ENCODE measurements at regions of chr10 and their contacts with region 1.

Region 1: DNA sequence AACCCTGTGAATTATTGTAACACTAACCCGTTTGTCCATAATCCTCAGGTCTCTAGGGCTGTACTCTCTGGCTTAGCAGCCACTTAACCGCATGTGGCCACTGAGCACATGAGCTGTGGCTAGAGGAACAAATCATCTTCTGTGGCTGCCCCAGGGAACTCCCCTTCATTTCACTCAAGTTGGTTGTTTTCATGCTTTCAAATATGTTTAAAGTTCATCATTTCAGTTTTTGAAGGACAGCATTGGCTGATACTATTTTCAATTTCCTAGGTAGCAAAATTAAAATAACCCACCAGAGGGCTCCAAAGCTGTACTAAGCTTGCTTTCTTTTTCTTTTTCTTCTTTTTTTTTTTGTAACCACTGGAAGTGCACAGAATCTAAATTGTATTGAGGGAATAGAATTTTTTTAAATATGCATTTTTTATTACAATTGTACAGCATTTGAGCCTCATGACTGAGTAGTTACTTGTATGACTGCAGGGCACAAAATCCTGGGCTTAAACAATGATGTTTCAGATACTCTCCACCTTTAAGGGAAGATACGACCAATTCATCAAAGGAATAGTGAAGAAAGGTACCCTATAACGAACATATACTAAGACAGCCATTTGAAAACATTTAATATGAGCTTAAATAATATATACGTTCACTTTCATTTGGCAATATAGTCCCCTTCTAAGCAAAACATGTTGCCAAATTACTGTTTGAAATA is 38.6 kb downstream of the MRC1 start:
- DNase-seq: peak; percentile 35
- H3K4me3 Mint-ChIP-seq: no peak overlapping the region
- H3K27ac Mint-ChIP-seq: no peak overlapping the region
- H3K4me1 Mint-ChIP-seq: peaks cover 9% of the 10 kb centered on the region
- H3K27me3 Mint-ChIP-seq: no peaks in the 10 kb centered on the region
- CTCF ChIP-seq: peak; percentile 38

Region 2: DNA sequence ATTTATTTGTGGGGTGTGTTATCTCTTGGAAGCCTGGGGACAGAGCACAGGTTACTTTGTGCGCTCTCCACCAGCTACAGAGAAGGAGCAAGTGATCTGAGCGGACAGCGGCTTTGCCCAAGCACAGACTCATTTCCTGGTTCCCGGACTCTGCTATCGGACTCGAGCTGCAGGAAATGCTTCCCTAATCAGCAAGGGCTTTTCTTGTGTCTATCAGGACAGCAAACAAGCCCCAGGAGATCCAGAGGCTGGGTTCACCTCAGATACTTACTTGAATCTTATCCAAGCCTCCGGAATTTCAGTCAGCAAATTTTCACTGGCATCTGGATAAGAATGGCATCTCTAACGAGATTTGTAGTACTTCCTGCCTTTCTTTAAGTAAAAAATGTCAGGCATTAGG is 10.8 kb before region 1 on chr10:
- CTCF ChIA-PET with region 1: interaction called, 14 read pairs
- POLR2A ChIA-PET with region 1: interaction called, 4 read pairs
- intact Hi-C with region 1: no loop called
- DNase-seq: peak; percentile 22
- H3K4me3 Mint-ChIP-seq: no peak overlapping the region
- H3K27ac Mint-ChIP-seq: no peak overlapping the region
- H3K4me1 Mint-ChIP-seq: peaks cover 25% of the 10 kb centered on the region
- H3K27me3 Mint-ChIP-seq: no peaks in the 10 kb centered on the region
- CTCF ChIP-seq: no peak

Region 3: DNA sequence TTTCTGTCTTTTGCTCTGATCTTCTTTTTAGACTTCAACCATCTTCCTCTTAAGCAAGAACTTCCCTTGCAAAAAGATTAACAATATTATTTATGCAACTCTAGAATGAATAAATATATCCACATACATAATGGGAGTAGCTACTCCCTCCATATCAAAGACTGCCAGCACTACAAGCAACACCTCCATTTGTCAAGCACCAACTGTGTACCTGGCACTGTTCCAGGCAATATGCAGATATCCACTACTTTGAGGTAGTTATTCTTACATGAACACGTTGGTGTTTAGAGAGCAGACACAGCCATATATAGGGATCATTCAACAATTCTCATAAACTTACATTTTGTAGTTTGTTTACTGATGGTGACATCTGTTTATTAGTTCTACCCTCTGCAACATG is 208.8 kb after region 1 on chr10:
- CTCF ChIA-PET with region 1: no interaction called
- POLR2A ChIA-PET with region 1: no interaction called
- intact Hi-C with region 1: no loop called
- DNase-seq: no peak
- H3K4me3 Mint-ChIP-seq: no peak overlapping the region
- H3K27ac Mint-ChIP-seq: no peak overlapping the region
- H3K4me1 Mint-ChIP-seq: no peaks in the 10 kb centered on the region
- H3K27me3 Mint-ChIP-seq: no peaks in the 10 kb centered on the region
- CTCF ChIP-seq: no peak

Region 4: DNA sequence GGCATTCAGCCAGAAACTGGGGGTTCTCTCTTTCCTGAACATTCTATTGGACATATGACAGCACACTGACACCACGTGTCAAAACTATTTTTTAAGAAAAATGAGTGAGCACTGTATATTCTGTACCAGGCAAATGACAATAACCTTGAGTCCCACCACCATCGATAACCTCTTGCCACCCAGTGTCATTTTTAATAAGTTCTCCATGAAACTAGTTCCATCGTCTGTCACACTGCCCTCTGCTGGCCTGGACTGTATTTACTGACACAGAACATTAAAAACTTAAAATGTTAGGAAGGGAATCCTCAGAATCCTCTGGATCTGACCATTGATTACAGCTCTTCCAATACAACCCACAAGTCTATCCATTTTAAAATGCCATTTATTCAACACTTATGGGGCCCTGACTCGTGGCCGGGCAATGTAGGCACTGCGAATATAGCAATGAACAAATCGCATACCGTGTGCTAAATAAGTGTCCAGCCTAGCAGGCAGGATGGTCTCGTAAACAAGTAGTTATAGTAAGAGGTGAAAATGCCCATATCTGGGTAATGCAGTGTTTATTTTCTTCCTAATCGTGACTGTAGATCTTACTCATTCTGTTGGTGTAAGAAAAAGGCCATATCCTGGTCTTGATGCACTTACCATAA is 256.6 kb after region 1 on chr10:
- CTCF ChIA-PET with region 1: interaction called, 19 read pairs
- POLR2A ChIA-PET with region 1: no interaction called
- intact Hi-C with region 1: loop called (anchors 1 kb)
- DNase-seq: peak; percentile 65
- H3K4me3 Mint-ChIP-seq: no peak overlapping the region
- H3K27ac Mint-ChIP-seq: no peak overlapping the region
- H3K4me1 Mint-ChIP-seq: peaks cover 6% of the 10 kb centered on the region
- H3K27me3 Mint-ChIP-seq: no peaks in the 10 kb centered on the region
- CTCF ChIP-seq: peak; percentile 69

Region 5: GRCh38 chr10:18238870-18239485 is 391.2 kb after region 1 on chr10:
- CTCF ChIA-PET with region 1: interaction called, 46 read pairs
- POLR2A ChIA-PET with region 1: no interaction called
- intact Hi-C with region 1: loop called (anchors 1 kb)
- DNase-seq: peak; percentile 57
- H3K4me3 Mint-ChIP-seq: no peak overlapping the region
- H3K27ac Mint-ChIP-seq: no peak overlapping the region
- H3K4me1 Mint-ChIP-seq: peaks cover 18% of the 10 kb centered on the region
- H3K27me3 Mint-ChIP-seq: no peaks in the 10 kb centered on the region
- CTCF ChIP-seq: peak; percentile 59

Measured in MCF 10A (cell line).